Heart left ventricle (tissue), 16 donors: ENCODE measurements at regions of chr7 and their contacts with region 1.

Region 1: DNA sequence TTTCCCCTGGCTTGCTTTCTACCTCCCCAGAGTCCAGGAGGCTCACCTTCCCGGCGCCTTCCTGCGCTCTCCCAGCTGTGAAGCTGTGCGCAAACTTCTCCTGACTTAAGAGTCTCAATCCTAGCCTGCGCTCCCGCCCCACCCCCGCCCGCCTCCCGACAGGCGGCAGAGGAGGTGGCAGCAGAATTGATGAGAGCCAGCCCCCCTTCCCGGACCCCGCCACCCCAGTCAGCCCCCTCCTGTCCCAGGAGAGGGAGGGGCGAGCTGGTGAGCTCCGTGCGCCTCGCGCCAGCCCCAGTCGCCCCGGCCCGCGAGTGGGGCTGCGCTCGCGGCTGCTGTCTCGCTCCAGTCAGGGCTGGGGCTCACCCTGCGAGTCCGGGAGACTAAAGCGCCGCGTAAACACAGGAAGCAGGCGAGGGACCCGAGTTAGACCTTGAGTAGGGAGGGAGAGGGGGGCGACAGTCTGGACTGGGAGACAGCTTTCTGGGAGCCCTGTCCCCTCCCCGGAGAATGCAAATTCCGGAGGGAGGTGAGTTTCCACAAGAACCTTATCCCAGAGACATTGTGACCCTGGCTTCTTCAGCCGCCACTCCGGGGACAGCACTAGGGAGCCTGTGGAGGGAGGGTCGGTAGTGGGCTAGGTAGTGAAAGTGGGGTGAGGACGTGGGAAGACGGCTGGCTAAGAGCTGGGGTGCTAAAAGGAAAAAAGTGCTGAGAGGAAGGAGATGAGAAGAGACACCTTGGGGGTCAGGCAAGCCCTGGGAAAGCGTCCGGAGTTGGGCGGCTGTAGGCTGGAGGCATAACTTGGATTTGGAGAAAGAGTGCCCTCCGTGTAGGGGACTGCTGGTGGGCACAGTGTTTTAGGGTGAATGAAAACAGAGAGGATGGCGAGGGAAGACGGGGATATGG is at the start of gene CALCR:
- DNase-seq: peak in 1 of 5 donors; percentile 52
- ATAC-seq: no peak
- H3K4me3 ChIP-seq: peak within 1 kb of the TSS in 7 of 12 donors; percentile 4 to 18 (median 12)
- H3K27ac ChIP-seq: no peak within 1 kb of the TSS
- H3K4me1 ChIP-seq: peaks cover 0 to 6% (median 0%) of the 10 kb centered on the region in 12 donors
- H3K27me3 ChIP-seq: peaks cover 0 to 47% (median 23%) of the 10 kb centered on the region in 9 donors
- CTCF ChIP-seq: no peak
- POLR2A ChIP-seq: no peak
- total RNA-seq, gene CALCR: 0.17 to 0.18 TPM in 2 of 9 donors, not detected in the others

Region 2: DNA sequence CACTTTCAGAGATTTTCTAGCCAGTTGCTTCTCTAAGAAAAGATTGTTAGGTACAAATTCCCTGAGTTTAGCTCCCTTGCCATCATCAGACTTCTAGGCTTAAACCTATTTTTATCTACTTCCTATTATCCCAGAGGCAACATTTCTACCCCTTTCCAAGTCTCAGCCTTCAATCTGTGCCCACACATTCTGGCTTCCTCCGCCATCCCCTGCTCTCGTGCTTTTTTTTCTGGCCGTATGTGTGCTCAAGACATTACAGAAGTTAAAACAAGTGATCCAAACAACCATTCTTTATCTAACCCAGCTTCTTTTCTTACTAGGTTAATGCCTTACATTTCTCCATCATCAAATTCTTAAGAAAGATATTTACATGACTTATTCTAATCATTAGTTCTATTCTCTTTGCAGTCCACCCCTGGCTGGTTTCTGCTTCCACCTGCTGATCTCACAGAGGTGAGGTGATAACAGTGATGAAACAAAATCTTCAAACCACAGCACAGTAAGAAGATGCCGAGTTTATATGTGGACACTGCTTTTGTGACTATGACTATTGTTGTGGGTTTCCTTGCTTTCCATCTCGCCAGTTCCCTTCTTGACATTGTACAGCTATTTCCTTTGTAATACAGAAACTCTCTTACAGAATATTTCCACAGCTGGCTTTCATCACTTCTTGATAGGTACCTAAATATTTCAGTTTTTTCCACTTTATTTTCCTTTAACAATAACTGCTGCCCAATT is 720.2 kb before region 1 on chr7:
- intact Hi-C with region 1: no loop called
- DNase-seq: no peak
- ATAC-seq: no peak
- H3K4me3 ChIP-seq: no peak overlapping the region
- H3K27ac ChIP-seq: no peak overlapping the region
- H3K4me1 ChIP-seq: no peaks in the 10 kb centered on the region
- H3K27me3 ChIP-seq: peaks cover 0 to 8% (median 0%) of the 10 kb centered on the region in 9 donors
- CTCF ChIP-seq: no peak
- POLR2A ChIP-seq: no peak

Region 3: GRCh38 chr7:93307131-93307660 is 267.7 kb before region 1 on chr7:
- intact Hi-C with region 1: no loop called
- DNase-seq: no peak
- ATAC-seq: no peak
- H3K4me3 ChIP-seq: no peak overlapping the region
- H3K27ac ChIP-seq: no peak overlapping the region
- H3K4me1 ChIP-seq: no peaks in the 10 kb centered on the region
- H3K27me3 ChIP-seq: no peaks in the 10 kb centered on the region
- CTCF ChIP-seq: no peak
- POLR2A ChIP-seq: no peak

Region 4: DNA sequence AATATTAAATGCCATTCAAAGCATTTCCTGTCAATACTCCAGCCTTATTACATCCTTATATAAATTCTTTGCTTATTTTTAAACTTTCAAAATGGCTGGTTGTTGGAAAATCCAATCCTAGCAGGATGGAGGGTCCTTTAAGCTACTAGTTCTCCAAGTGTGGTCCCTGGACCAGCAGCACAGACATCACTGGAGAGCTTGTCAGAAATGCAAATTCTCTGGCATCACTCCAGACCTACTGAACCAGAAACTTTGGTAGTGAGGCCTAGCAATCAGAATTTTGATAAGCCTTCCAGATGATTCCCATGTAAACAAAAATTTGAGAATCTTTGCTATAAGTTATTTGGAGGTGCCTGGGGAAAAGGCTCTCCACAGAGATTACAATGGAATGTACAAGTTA is 44.2 kb before region 1 on chr7:
- intact Hi-C with region 1: loop called in 1 of 10 experiments (anchors 5 kb)
- DNase-seq: no peak
- ATAC-seq: no peak
- H3K4me3 ChIP-seq: no peak overlapping the region
- H3K27ac ChIP-seq: no peak overlapping the region
- H3K4me1 ChIP-seq: no peaks in the 10 kb centered on the region
- H3K27me3 ChIP-seq: no peaks in the 10 kb centered on the region
- CTCF ChIP-seq: no peak
- POLR2A ChIP-seq: no peak

Region 5: DNA sequence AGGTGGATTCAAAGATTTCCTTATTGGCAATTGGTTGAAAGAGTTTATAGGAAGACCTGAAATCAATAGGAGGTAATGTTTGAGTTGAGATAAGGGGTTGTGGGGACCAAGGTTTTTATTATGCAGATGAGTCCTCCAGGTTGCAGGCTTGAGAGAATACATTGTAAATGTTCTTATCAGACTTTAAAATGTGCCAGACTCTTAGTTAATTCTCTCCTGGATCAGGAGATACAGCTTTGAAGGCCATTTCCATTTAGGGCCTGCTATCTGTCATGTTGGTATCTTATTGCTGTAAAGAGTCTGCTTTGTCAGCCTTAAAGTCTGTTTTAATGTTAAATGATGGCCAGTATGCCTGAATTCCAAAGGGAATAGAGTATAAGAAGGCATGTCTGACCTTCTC is 61.4 kb after region 1 on chr7:
- intact Hi-C with region 1: loop called in 1 of 10 experiments (anchors 10 kb)
- DNase-seq: no peak
- ATAC-seq: no peak
- H3K4me3 ChIP-seq: no peak overlapping the region
- H3K27ac ChIP-seq: no peak overlapping the region
- H3K4me1 ChIP-seq: no peaks in the 10 kb centered on the region
- H3K27me3 ChIP-seq: no peaks in the 10 kb centered on the region
- CTCF ChIP-seq: no peak
- POLR2A ChIP-seq: no peak